ENCODE measurements at regions of chr10 and their contacts with region 1.

Region 1: DNA sequence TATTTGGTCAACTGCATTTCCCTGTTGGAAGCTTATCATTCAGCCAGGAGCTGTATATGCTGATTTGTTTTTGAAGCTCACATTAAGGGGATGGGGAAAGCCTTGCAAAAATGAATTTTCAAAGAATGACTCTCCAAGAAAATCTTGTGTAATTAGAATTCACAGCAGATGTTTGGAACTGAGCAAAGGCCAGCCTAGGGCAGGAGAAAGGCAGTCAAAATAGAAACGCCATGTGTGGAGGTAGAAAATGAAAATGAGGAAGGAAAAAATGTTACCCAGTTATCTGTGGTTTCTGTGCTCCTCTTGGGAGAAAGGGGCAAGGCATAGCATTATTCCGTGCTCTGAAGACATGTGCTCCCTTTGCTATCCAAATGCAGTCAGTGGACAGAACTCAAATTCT is 93.5 kb downstream of the NRP1 start:
- DNase-seq: no peak
- H3K4me3 Mint-ChIP-seq: no peak overlapping the region
- H3K27ac Mint-ChIP-seq: no peak overlapping the region
- H3K4me1 Mint-ChIP-seq: peaks cover 7% of the 10 kb centered on the region
- H3K27me3 Mint-ChIP-seq: peaks cover 10% of the 10 kb centered on the region

Region 2: GRCh38 chr10:33211106-33211878 is 29.6 kb before region 1 on chr10:
- CTCF ChIA-PET with region 1: no interaction called
- POLR2A ChIA-PET with region 1: no interaction called
- intact Hi-C with region 1: no loop called
- DNase-seq: peak; percentile 56
- H3K4me3 Mint-ChIP-seq: no peak overlapping the region
- H3K27ac Mint-ChIP-seq: peak overlapping the region; percentile 36
- H3K4me1 Mint-ChIP-seq: peaks cover 20% of the 10 kb centered on the region
- H3K27me3 Mint-ChIP-seq: no peaks in the 10 kb centered on the region

Region 3: DNA sequence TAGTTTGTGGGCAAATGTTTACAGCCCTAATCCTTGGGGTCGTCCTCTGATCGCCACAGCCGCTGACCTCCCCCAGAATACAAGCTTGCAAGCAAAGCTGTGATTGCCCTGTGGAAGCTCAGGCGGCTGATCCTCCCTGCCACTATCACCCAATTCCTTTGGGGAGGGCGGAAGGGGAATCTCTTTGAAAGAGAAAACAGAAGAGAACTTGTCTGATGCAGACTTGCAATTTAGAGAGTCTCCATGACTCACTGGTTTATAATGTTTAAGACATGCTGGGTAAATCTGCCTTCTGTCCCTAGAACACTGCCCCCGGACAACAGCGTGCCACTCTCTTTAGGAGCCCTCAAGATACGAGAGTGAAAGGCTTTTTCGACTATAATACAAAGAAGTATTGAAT is 18.0 kb after region 1 on chr10:
- CTCF ChIA-PET with region 1: no interaction called
- POLR2A ChIA-PET with region 1: no interaction called
- intact Hi-C with region 1: no loop called
- DNase-seq: no peak
- H3K4me3 Mint-ChIP-seq: no peak overlapping the region
- H3K27ac Mint-ChIP-seq: no peak overlapping the region
- H3K4me1 Mint-ChIP-seq: peaks cover 10% of the 10 kb centered on the region
- H3K27me3 Mint-ChIP-seq: peaks cover 51% of the 10 kb centered on the region

Region 4: DNA sequence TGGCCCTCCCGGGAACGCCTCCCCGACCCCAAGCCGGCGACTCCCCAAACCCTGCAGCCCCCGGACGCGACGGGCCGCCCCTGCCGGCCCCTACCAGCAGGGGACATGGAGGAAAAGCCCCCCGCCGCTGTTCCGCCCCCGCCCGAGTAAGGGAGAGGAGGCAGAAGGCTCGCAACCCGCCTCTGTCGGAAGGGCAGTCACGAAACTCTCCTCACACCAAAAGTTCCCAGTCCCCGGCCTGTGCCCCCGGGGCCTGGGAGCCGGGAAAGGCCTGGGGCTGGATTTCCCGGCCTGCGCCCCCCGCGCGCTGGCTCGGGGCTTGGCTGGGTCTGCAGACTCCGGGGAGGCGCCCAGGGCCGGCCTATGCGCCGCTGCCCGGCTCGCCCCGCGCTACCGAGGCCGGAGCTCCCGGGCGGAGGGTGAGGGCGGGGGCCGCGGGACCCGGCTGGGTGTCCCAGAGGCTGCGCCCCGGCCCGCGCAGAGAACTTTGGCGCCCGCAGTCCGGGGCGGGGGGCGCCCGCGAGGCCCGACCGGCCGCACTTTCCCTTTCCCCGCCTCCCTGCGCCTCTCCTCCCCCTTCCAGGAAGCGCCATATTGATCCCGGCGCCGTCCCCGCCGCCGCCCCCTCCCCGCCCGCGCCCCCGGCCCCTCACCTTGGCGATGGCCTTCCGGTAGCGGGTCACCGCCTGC is 1573.4 kb after region 1 on chr10:
- CTCF ChIA-PET with region 1: no interaction called
- POLR2A ChIA-PET with region 1: no interaction called
- intact Hi-C with region 1: loop called (anchors 5 kb)
- DNase-seq: no peak
- H3K4me3 Mint-ChIP-seq: peak overlapping the region; percentile 49
- H3K27ac Mint-ChIP-seq: no peak overlapping the region
- H3K4me1 Mint-ChIP-seq: peaks cover 19% of the 10 kb centered on the region
- H3K27me3 Mint-ChIP-seq: peaks cover 54% of the 10 kb centered on the region

Measured in activated CD4-positive, alpha-beta memory T cell treated with anti-CD3 and anti-CD28 coated beads for 36 hours (primary cell).